ENCODE measurements at regions of chr1 and their contacts with region 1.

Region 1: GRCh38 chr1:233512538-233512937 is 101.4 kb upstream of the KCNK1 start:
- H3K4me3 Mint-ChIP-seq: no peak overlapping the region
- H3K27ac Mint-ChIP-seq: peak overlapping the region; percentile 10
- H3K4me1 Mint-ChIP-seq: peaks cover 52% of the 10 kb centered on the region
- H3K27me3 Mint-ChIP-seq: no peaks in the 10 kb centered on the region

Region 2: GRCh38 chr1:233477359-233477758 is 35.2 kb before region 1 on chr1:
- intact Hi-C with region 1: loop called (anchors 5 kb)
- H3K4me3 Mint-ChIP-seq: no peak overlapping the region
- H3K27ac Mint-ChIP-seq: peak overlapping the region; percentile 48
- H3K4me1 Mint-ChIP-seq: peaks cover 34% of the 10 kb centered on the region
- H3K27me3 Mint-ChIP-seq: peaks cover 8% of the 10 kb centered on the region

Region 3: GRCh38 chr1:233627376-233627775 is 114.8 kb after region 1 on chr1:
- intact Hi-C with region 1: no loop called
- H3K4me3 Mint-ChIP-seq: no peak overlapping the region
- H3K27ac Mint-ChIP-seq: no peak overlapping the region
- H3K4me1 Mint-ChIP-seq: no peaks in the 10 kb centered on the region
- H3K27me3 Mint-ChIP-seq: peaks cover 9% of the 10 kb centered on the region

Region 4: DNA sequence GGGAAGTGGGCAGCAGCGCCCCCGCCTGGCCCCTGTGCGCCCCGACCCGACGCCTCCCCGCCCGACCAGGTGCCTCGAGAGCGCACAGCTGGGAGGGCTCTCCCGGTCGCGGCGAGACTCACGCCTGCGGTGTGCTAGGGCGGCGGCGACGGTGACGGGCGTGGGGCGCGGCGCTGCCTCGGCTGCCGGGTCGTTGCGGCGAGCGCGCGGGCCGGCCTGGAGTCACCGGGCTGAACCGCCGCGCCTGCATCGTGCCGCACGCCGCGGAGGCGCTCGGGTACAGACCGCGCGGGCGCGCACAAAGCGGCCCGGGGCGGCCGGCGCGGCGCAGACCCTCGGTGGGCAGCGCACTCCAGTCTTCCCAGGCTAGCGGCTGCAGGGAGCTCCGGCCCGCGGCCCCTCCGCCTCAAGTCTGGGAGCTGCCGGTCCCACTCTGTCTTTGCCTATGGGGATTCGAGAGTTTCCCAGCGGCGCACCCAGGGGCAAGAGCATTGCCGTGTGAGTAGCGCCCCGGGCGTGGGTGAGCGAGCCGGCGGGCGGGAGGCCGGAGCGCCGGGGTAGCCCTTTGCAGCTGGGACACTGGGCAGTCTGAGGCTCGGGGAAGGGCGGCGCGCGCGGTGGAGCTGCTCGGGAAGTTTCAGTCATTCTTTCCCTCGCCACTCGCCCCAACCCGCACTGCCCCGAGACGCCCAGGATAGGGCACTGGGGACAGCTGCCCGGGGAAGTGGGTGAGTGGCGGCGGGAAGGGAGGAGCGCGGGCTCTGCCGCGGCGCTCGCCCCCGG is 392.3 kb after region 1 on chr1 and contains the start of gene SLC35F3:
- intact Hi-C with region 1: no loop called
- H3K4me3 Mint-ChIP-seq: no peak within 1 kb of the TSS
- H3K27ac Mint-ChIP-seq: no peak within 1 kb of the TSS
- H3K4me1 Mint-ChIP-seq: no peaks in the 10 kb centered on the region
- H3K27me3 Mint-ChIP-seq: peaks cover 48% of the 10 kb centered on the region

Measured in dendritic cell treated with granulocyte-macrophage colony-stimulating factor and Interleukin-4, amounts not matched to agents 40 ng/mL and 50 ng/mL, for 4 days (primary cell).